PC-9 (cell line): ENCODE measurements at regions of chr5 and their contacts with region 1.

Region 1: DNA sequence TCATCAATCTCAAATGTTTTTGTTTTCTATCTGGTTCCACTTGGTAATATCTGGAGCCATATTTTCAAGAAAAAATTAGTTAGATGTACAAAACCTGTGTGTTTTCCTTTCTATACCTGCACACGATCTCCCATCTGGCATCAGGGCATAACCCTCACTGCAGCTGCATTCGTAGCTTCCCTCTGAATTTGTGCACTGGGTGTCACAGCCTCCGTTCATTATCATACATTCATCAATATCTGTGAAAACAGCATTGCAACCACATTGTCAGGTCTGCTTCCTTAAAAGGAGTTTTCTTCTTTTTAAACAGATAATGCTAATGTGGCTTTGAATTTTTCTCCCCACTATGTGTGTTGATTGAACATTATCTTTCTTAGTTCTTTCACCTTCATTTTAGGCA is 202.7 kb downstream of the FBN2 start:
- DNase-seq: no peak
- H3K4me3 ChIP-seq: no peak overlapping the region
- H3K27ac ChIP-seq: no peak overlapping the region
- H3K4me1 ChIP-seq: no peaks in the 10 kb centered on the region
- H3K27me3 ChIP-seq: no peaks in the 10 kb centered on the region
- CTCF ChIP-seq: no peak

Region 2: GRCh38 chr5:128315671-128316070 is 19.7 kb before region 1 on chr5:
- CTCF ChIA-PET with region 1: no interaction called
- POLR2A ChIA-PET with region 1: no interaction called
- intact Hi-C with region 1: no loop called
- DNase-seq: peak in 1 of 2 experiments; percentile 36
- H3K4me3 ChIP-seq: no peak overlapping the region
- H3K27ac ChIP-seq: no peak overlapping the region
- H3K4me1 ChIP-seq: no peaks in the 10 kb centered on the region
- H3K27me3 ChIP-seq: no peaks in the 10 kb centered on the region
- CTCF ChIP-seq: no peak

Region 3: GRCh38 chr5:128403333-128403732 is 68.0 kb after region 1 on chr5:
- CTCF ChIA-PET with region 1: no interaction called
- POLR2A ChIA-PET with region 1: interaction called, 13 read pairs
- intact Hi-C with region 1: no loop called
- DNase-seq: no peak
- H3K4me3 ChIP-seq: no peak overlapping the region
- H3K27ac ChIP-seq: no peak overlapping the region
- H3K4me1 ChIP-seq: no peaks in the 10 kb centered on the region
- H3K27me3 ChIP-seq: no peaks in the 10 kb centered on the region
- CTCF ChIP-seq: no peak

Region 4: GRCh38 chr5:129629575-129629974 is 1294.2 kb after region 1 on chr5:
- CTCF ChIA-PET with region 1: no interaction called
- POLR2A ChIA-PET with region 1: no interaction called
- intact Hi-C with region 1: no loop called
- DNase-seq: no peak
- H3K4me3 ChIP-seq: no peak overlapping the region
- H3K27ac ChIP-seq: no peak overlapping the region
- H3K4me1 ChIP-seq: no peaks in the 10 kb centered on the region
- H3K27me3 ChIP-seq: no peaks in the 10 kb centered on the region
- CTCF ChIP-seq: no peak